ENCODE measurements at regions of chr14 and their contacts with region 1.

Region 1: DNA sequence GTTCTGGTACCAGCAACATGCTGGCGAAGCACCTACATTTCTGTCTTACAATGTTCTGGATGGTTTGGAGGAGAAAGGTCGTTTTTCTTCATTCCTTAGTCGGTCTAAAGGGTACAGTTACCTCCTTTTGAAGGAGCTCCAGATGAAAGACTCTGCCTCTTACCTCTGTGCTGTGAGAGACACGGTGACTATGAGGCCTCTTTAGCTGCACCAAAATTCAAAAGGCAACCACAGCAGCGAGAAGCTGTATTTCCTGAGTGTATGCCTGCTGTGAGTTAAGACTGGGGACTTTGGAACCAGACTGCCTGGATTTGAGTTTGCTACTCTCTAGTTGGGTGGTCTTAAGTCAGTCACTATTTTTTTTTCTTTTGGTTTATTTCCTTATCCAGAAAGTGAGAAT is 8.7 kb upstream of the OR10G2 start:
- DNase-seq: no peak
- H3K4me3 Mint-ChIP-seq: peak overlapping the region; percentile 47
- H3K27ac Mint-ChIP-seq: peak overlapping the region; percentile 75
- H3K4me1 Mint-ChIP-seq: peaks cover 3% of the 10 kb centered on the region
- H3K27me3 Mint-ChIP-seq: peaks cover 6% of the 10 kb centered on the region

Region 2: DNA sequence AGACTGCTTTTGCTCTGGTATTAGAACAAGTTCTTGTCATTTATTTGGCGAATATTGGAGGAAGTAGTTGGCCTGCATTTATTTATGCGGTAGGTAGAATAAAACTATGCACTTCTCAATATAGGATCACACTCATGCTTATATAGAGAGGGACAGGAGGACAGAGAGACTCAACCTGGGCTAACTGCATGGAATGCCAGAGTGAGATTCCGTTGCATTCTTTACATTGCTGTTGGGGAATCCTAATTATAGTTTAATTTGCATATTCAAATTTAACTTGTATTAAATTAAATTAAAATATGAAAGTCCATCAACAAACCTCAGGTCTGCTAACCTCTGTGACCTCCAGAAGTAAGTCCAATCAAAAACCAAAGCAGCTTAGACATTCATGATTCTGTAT is 90.1 kb before region 1 on chr14:
- CTCF ChIA-PET with region 1: no interaction called
- intact Hi-C with region 1: no loop called
- DNase-seq: no peak
- H3K4me3 Mint-ChIP-seq: no peak overlapping the region
- H3K27ac Mint-ChIP-seq: no peak overlapping the region
- H3K4me1 Mint-ChIP-seq: peaks cover 6% of the 10 kb centered on the region
- H3K27me3 Mint-ChIP-seq: no peaks in the 10 kb centered on the region

Region 3: DNA sequence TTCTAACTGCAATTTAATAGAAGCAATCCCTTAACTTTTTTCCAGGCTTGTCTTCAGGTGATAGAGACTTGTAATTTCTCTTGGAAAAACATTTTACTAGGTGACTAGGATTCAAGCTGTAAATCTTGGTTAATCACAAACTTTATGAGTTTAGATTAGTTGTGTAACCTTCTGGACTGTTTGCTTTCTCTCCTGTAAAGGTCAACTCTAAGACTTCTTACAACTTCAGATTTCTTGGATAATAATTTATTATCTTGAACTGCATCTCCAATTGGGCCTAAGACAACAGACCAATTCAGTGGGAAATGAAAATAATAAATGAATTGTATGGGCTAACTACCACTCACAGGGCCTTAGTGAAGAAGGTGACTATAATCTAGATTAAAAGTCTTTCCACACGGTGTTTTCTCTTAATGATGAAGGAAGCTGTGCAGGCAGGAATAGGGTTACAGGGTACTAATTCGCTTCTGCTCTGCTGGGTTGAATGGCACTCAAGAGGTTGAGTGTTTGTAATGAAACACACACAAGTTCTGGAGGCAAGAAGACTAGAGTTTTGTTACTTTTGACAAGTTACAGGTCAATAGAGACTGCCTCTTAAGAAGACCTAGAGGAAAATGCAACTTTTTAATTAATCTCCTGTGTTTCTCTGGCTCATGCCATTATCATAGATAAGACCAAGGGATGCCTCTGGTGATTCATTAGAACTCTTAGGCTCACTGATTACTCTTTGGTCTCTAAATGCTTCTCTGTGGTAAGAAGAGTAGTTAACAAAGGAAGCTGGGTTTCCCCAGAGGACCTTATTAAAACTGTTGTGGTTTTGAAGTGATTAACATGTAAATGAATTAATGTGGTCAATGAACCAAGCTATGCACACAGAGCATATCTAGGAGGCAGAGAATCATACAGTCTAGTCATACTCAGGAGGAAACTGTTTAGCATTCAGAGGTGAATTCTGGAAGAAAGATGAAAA is 60.2 kb after region 1 on chr14:
- CTCF ChIA-PET with region 1: interaction called, 4 read pairs
- intact Hi-C with region 1: loop called (anchors 1 kb)
- DNase-seq: no peak
- H3K4me3 Mint-ChIP-seq: no peak overlapping the region
- H3K27ac Mint-ChIP-seq: peak overlapping the region; percentile 37
- H3K4me1 Mint-ChIP-seq: peaks cover 25% of the 10 kb centered on the region
- H3K27me3 Mint-ChIP-seq: peaks cover 4% of the 10 kb centered on the region

Region 4: DNA sequence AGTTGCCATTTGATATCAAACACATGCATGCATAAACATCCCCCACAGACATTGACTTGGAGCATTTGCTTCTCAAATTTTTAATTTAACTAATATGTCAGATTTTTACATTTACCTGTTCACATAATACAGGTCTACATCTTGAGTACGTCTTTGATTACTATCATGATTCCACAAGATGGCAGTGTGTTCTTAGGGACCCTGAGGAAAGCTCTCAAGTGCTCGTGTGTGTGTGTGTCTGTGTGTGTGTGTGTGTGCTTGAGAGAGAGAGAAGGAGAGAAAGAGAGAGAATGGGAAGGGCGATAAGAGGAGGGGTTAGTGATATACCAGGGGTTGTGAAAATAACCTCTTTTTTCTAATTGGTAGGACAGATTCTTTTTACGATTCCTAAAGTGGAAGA is 197.4 kb after region 1 on chr14:
- CTCF ChIA-PET with region 1: no interaction called
- intact Hi-C with region 1: no loop called
- DNase-seq: no peak
- H3K4me3 Mint-ChIP-seq: peak overlapping the region; percentile 65
- H3K27ac Mint-ChIP-seq: peak overlapping the region; percentile 73
- H3K4me1 Mint-ChIP-seq: peaks cover 7% of the 10 kb centered on the region
- H3K27me3 Mint-ChIP-seq: peaks cover 4% of the 10 kb centered on the region

Region 5: GRCh38 chr14:22531451-22532344 is 888.3 kb after region 1 on chr14:
- CTCF ChIA-PET with region 1: no interaction called
- intact Hi-C with region 1: loop called (anchors 5 kb)
- DNase-seq: peak; percentile 65
- H3K4me3 Mint-ChIP-seq: peak overlapping the region; percentile 77
- H3K27ac Mint-ChIP-seq: peak overlapping the region; percentile 98
- H3K4me1 Mint-ChIP-seq: peaks cover 82% of the 10 kb centered on the region
- H3K27me3 Mint-ChIP-seq: no peaks in the 10 kb centered on the region

Measured in activated naive CD4-positive, alpha-beta T cell treated with anti-CD3 and anti-CD28 coated beads for 36 hours (primary cell).